Ovary (tissue), 10 donors: ENCODE measurements at regions of chr9 and their contacts with region 1.

Region 1: GRCh38 chr9:23379842-23380241 is 446.2 kb downstream of the ELAVL2 start:
- DNase-seq: no peak
- H3K4me3 ChIP-seq: no peak overlapping the region
- H3K27ac ChIP-seq: no peak overlapping the region
- H3K4me1 ChIP-seq: peaks cover 2% of the 10 kb centered on the region
- H3K27me3 ChIP-seq: no peaks in the 10 kb centered on the region
- CTCF ChIP-seq: no peak
- EP300 ChIP-seq: no peak
- POLR2A ChIP-seq: no peak

Region 2: DNA sequence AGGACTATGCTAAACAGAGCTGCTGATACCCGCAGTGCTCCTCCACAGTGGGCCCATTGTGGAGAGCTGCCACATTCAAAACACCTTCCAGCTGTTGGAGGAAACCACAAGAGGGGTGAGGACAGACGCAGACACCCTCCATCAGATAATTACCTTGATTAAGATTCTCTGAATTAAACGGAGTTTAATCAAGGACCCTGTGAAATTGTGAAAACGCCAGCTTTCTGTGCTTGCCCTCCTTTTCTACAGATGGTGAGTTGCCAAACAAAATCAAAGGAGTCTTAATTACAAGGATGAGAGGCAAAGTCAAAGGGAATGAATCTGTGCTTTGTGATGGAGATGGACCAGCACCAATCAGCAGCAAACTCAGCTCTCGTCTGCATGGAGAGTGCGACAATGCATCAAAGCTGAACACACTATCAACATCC is 149.9 kb before region 1 on chr9:
- intact Hi-C with region 1: no loop called
- DNase-seq: no peak
- H3K4me3 ChIP-seq: no peak overlapping the region
- H3K27ac ChIP-seq: no peak overlapping the region
- H3K4me1 ChIP-seq: no peaks in the 10 kb centered on the region
- H3K27me3 ChIP-seq: no peaks in the 10 kb centered on the region
- CTCF ChIP-seq: no peak
- EP300 ChIP-seq: no peak
- POLR2A ChIP-seq: no peak

Region 3: GRCh38 chr9:25284365-25284764 is 1904.5 kb after region 1 on chr9:
- intact Hi-C with region 1: loop called in 1 of 4 experiments (anchors 5 kb)
- DNase-seq: no peak
- H3K4me3 ChIP-seq: no peak overlapping the region
- H3K27ac ChIP-seq: no peak overlapping the region
- H3K4me1 ChIP-seq: no peaks in the 10 kb centered on the region
- H3K27me3 ChIP-seq: no peaks in the 10 kb centered on the region
- CTCF ChIP-seq: no peak
- EP300 ChIP-seq: no peak
- POLR2A ChIP-seq: no peak